ENCODE measurements at regions of chr21 and their contacts with region 1.

Region 1: DNA sequence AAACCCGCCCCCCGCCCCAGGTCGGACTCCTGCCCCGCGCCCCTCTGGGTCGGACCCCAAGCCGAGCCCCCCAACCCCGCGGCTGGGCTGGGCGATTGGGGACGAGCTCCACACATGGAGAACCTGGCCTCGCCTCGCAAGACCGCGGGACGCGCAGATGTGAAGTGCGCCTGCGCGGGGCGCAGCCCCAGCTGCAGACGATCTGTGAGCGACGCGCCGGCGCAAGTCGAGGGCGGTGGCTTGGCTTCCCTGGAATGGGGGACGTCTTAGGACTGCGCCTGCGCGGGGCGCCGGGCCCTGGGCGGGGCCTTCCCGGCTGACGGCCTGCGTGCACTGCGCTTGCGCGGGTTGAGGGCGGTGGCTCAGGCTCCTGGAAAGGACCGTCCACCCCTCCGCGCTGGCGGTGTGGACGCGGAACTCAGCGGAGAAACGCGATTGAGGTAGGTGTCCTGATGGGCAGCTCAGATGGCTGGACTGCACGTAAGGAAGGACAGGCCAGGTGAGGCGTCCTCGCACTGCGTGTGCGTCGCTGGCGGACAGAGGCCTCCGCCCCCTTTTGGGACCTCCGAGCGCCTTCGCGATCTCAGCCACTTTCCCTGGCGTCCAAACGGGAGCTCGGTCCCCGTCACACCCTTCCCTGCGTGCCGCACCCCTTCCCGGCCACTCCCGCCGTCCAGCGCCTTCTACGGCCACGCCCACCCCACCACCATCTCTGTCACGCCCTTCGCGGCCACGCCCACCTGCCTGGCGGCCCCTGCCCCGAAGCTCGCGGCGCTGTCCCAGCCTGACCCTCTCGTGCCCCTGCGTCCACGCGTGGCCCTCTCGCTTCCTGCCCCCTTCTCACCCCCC is at the start of gene PRMT2:
- DNase-seq: peak; percentile 98
- ATAC-seq: peak; percentile 90
- H3K4me3 Mint-ChIP-seq: peak within 1 kb of the TSS; percentile 92
- H3K27ac Mint-ChIP-seq: peak within 1 kb of the TSS; percentile 84
- H3K4me1 Mint-ChIP-seq: peaks cover 67% of the 10 kb centered on the region
- H3K27me3 Mint-ChIP-seq: no peaks in the 10 kb centered on the region
- total RNA-seq, gene PRMT2: 110 to 117 TPM

Region 2: DNA sequence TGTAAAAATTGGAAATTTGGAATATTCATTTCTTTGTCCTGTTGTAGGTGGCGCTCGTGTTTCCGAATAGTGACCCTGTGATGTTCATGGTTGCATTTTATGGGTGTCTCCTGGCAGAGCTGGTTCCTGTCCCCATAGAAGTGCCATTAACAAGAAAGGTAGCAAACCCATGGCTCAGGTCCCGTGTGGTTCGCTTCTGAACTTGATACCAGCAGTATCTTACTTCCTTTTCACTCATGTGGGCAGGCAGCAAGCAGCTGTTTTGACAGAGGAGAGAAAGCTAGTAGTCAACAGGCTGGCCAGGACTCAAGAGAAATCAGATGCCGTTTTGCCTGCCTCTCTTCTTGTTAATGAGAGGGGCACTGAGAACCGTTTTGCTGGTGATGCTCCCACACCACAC is 103.5 kb before region 1 on chr21:
- CTCF ChIA-PET with region 1: interaction called, 12 read pairs
- POLR2A ChIA-PET with region 1: interaction called, 5 read pairs
- DNase-seq: peak; percentile 34
- ATAC-seq: peak; percentile 36
- H3K4me3 Mint-ChIP-seq: no peak overlapping the region
- H3K27ac Mint-ChIP-seq: peak overlapping the region; percentile 85
- H3K4me1 Mint-ChIP-seq: peaks cover 7% of the 10 kb centered on the region
- H3K27me3 Mint-ChIP-seq: no peaks in the 10 kb centered on the region

Region 3: GRCh38 chr21:46551636-46552241 is 83.8 kb before region 1 on chr21:
- CTCF ChIA-PET with region 1: interaction called, 14 read pairs
- POLR2A ChIA-PET with region 1: interaction called, 21 read pairs
- DNase-seq: peak; percentile 58
- ATAC-seq: peak; percentile 63
- H3K4me3 Mint-ChIP-seq: peak overlapping the region; percentile 44
- H3K27ac Mint-ChIP-seq: peak overlapping the region; percentile 85
- H3K4me1 Mint-ChIP-seq: peaks cover 42% of the 10 kb centered on the region
- H3K27me3 Mint-ChIP-seq: no peaks in the 10 kb centered on the region

Region 4: DNA sequence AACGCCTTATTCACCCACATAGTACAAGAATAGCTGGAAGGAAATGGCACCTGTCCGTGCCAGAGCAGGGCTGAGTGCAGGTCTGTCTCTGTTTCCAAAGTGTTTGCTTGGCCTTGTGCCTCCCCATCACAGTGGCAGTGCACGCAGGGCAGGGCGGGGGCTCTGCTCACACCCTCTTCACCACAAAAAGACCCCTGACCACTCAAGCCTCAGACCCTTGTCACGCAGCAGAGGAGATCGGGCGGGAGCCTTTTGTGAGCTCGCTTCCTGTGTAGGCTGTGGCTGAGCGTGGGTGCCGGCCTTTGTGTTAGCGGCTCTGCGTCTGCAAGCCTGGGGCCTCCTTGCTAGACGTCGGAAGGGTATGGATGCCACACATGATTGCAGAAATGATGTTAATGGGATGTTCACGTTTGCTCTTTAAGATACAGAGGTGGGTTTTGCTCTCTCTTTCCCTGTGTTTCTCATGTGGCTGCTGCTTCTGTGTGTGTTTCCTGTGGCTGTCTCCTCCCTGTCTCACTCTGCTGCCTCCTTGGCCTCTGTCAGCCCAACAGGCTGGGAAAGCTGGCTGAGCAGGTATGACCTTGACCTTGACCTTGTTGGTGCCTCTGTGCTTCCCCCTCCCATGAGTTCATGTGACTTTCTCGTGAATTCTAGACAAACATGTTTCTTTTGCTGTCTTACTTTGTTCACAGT is 76.1 kb before region 1 on chr21:
- CTCF ChIA-PET with region 1: interaction called, 14 read pairs
- POLR2A ChIA-PET with region 1: interaction called, 36 read pairs
- DNase-seq: peak; percentile 77
- ATAC-seq: peak; percentile 84
- H3K4me3 Mint-ChIP-seq: peak overlapping the region; percentile 72
- H3K27ac Mint-ChIP-seq: peak overlapping the region; percentile 97
- H3K4me1 Mint-ChIP-seq: peaks cover 57% of the 10 kb centered on the region
- H3K27me3 Mint-ChIP-seq: no peaks in the 10 kb centered on the region

Region 5: GRCh38 chr21:46605767-46606426 is 29.7 kb before region 1 on chr21:
- CTCF ChIA-PET with region 1: interaction called, 10 read pairs
- POLR2A ChIA-PET with region 1: interaction called, 25 read pairs
- DNase-seq: peak; percentile 83
- ATAC-seq: peak; percentile 98
- H3K4me3 Mint-ChIP-seq: peak overlapping the region; percentile 30
- H3K27ac Mint-ChIP-seq: peak overlapping the region; percentile 89
- H3K4me1 Mint-ChIP-seq: peaks cover 45% of the 10 kb centered on the region
- H3K27me3 Mint-ChIP-seq: no peaks in the 10 kb centered on the region

Region 6: GRCh38 chr21:46622226-46622625 is 13.3 kb before region 1 on chr21:
- CTCF ChIA-PET with region 1: interaction called, 18 read pairs
- POLR2A ChIA-PET with region 1: interaction called, 33 read pairs
- DNase-seq: peak; percentile 69
- ATAC-seq: peak; percentile 89
- H3K4me3 Mint-ChIP-seq: peak overlapping the region; percentile 57
- H3K27ac Mint-ChIP-seq: peak overlapping the region; percentile 93
- H3K4me1 Mint-ChIP-seq: peaks cover 53% of the 10 kb centered on the region
- H3K27me3 Mint-ChIP-seq: no peaks in the 10 kb centered on the region